Heart right ventricle (tissue), 16 donors: ENCODE measurements at regions of chr5 and their contacts with region 1.

Region 1: GRCh38 chr5:114449860-114450421 is 88.1 kb downstream of the KCNN2 start:
- DNase-seq: peak; percentile 75 to 80
- ATAC-seq: peak; percentile 94 to 100 (median 99)
- H3K4me3 ChIP-seq: peak overlapping the region in 2 of 10 donors; percentile 14 to 29
- H3K27ac ChIP-seq: peak overlapping the region in 2 of 10 donors; percentile 50 to 55
- H3K4me1 ChIP-seq: peaks cover 0 to 28% (median 6%) of the 10 kb centered on the region in 9 donors
- H3K27me3 ChIP-seq: no peaks in the 10 kb centered on the region
- CTCF ChIP-seq: peak; percentile 74 to 93 (median 81)

Region 2: DNA sequence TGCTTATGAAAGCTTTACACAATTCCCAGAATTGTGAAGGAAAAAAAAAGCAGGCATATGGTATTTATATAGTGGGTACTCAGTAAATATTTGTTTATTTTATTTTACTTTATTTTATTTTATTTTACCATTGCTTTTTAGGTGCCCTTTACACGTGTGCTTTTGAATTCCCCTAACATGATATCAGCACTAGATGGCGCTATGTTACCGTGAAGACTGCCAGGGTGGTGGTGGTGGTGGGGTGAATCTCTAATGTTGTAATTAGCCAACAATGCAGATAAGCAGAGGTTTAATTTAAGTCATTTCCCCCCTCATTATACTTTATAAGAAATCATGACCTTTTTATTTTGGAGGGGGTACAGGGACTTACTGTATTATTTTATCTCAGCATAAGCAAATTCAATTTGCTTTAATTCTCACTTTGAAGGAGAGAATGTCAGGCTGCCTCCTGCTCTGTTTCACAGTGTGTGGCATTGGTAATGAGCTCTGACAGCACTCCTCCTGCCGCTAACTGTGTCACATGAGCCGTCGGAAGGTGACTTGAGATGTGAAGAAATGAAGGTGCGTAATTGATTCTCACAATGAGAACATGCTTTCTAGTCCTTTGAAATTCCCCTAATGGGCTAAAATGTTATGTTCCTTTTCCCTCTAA is 770.9 kb before region 1 on chr5:
- intact Hi-C with region 1: loop called in 8 of 10 experiments (anchors 2 to 10 kb)
- DNase-seq: no peak
- ATAC-seq: peak in 7 of 8 donors; percentile 53 to 84 (median 69)
- H3K4me3 ChIP-seq: no peak overlapping the region
- H3K27ac ChIP-seq: no peak overlapping the region
- H3K4me1 ChIP-seq: no peaks in the 10 kb centered on the region
- H3K27me3 ChIP-seq: no peaks in the 10 kb centered on the region
- CTCF ChIP-seq: peak; percentile 55 to 80 (median 71)

Region 3: GRCh38 chr5:114101153-114101552 is 348.8 kb before region 1 on chr5:
- intact Hi-C with region 1: loop called in 9 of 10 experiments (anchors 2 to 10 kb)
- DNase-seq: peak in 1 of 2 donors; percentile 45
- ATAC-seq: peak in 2 of 8 donors; percentile 49 to 64
- H3K4me3 ChIP-seq: no peak overlapping the region
- H3K27ac ChIP-seq: no peak overlapping the region
- H3K4me1 ChIP-seq: no peaks in the 10 kb centered on the region
- H3K27me3 ChIP-seq: no peaks in the 10 kb centered on the region
- CTCF ChIP-seq: peak; percentile 28 to 77 (median 63)

Region 4: DNA sequence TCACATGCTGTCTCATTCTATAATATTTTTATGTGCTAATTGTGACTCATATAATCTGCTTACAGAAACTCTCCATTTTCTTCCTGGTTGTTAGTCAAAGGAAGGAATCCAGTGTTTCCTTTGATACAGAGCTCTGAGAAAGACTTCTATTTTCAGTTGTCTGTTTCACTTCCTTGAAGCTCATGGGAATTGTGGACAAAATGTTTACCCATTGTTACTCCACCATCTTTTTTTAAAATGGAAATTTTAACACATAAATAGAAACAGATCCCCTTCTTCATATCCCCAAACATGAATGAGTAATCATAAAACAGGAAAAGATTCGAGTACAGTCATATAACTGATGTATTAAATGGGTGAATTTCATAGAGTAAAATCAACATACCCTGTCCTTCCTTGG is 130.1 kb before region 1 on chr5:
- intact Hi-C with region 1: loop called in 1 of 10 experiments (anchors 10 kb)
- DNase-seq: no peak
- ATAC-seq: peak in 7 of 8 donors; percentile 38 to 91 (median 72)
- H3K4me3 ChIP-seq: no peak overlapping the region
- H3K27ac ChIP-seq: peak overlapping the region in 7 of 10 donors; percentile 15 to 81 (median 59)
- H3K4me1 ChIP-seq: peaks cover 0 to 37% (median 0%) of the 10 kb centered on the region in 9 donors
- H3K27me3 ChIP-seq: no peaks in the 10 kb centered on the region
- CTCF ChIP-seq: no peak